Stomach (tissue), 19 donors: ENCODE measurements at regions of chr1 and their contacts with region 1.

Region 1: DNA sequence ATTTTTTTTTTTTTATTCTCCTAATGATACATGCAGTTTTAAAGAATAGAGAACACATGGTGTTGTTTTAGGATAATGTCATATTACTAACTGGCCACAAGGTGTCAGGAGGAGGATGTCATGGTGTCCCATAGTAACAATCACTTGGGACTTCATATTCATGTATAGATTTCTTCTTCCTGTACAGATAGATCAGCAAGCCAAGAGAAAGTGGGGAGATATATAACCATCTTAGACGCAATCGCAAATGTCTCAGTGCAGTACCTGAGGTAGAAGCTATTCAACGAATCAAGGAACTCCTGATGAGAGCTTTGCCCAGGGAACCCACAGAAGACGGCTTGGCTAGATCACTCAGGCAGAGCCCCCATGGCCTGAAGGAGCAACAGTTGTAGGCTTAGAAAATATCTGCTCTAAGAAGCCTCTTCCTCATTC is 12.3 kb downstream of the OR2T11 start:
- DNase-seq: peak in 1 of 2 donors; percentile 72
- H3K4me3 ChIP-seq: no peak overlapping the region
- H3K27ac ChIP-seq: no peak overlapping the region
- H3K4me1 ChIP-seq: no peaks in the 10 kb centered on the region
- H3K27me3 ChIP-seq: no peaks in the 10 kb centered on the region
- CTCF ChIP-seq: peak in 5 of 7 experiments; percentile 24 to 60 (median 57)
- EP300 ChIP-seq: no peak
- POLR2A ChIP-seq: no peak

Region 2: DNA sequence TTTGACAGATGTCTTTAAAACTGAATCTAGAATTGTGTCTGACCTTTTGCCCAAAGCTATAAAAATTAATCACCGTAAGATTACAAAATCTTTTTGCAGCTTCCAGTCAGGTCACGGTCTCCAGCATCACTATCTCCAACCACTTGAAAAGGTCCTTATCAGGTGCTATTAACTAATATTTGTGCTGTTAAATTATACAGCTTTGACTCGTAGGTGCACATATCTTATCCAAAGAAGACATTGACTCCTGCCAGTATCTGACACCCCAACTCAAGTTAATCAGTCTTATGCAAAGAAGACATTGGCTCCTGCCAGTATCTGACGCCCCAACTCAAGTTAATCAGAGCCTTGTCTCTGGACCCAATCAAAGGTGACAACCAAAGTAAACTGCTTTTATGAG is 152.9 kb after region 1 on chr1:
- intact Hi-C with region 1: no loop called
- DNase-seq: no peak
- H3K4me3 ChIP-seq: no peak overlapping the region
- H3K27ac ChIP-seq: no peak overlapping the region
- H3K4me1 ChIP-seq: no peaks in the 10 kb centered on the region
- H3K27me3 ChIP-seq: no peaks in the 10 kb centered on the region
- CTCF ChIP-seq: no peak
- EP300 ChIP-seq: no peak
- POLR2A ChIP-seq: no peak

Region 3: DNA sequence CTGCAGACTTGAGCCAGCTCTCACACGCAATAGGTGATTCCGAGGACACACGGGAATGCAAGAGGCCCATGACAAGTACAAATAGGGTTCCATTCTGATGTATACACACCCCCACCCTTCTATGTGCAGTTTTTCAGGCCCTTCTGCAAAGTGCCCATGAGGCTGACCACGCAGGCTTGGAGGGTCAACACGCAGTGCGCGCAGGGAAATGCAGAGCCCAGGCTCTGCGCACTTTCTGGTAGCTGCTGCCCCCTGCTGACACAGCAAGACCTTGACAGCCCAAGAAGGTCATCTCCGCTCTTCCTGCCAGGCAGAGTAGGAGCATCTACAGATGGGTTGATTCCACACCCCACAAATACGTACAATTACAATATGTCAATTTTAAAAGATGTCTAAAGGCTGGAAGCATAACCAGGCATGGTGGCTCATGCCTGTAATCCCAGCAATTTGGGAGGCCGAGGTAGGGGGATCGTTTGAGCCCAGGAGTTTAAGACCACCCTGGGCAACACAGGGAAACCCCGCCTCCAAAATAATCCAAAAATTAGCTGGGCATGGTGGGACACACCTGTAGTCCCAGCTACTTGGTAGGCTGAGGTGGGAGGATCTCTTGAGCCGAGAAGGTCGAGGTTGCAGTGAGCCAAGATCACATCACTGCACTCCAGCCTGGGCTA is 184.6 kb after region 1 on chr1:
- intact Hi-C with region 1: loop called (anchors 5 kb)
- DNase-seq: peak; percentile 67 to 83
- H3K4me3 ChIP-seq: no peak overlapping the region
- H3K27ac ChIP-seq: no peak overlapping the region
- H3K4me1 ChIP-seq: peaks cover 8 to 46% (median 36%) of the 10 kb centered on the region in 4 donors
- H3K27me3 ChIP-seq: peaks cover 0 to 3% (median 0%) of the 10 kb centered on the region in 3 donors
- CTCF ChIP-seq: peak in 5 of 7 experiments; percentile 52 to 80 (median 66)
- EP300 ChIP-seq: no peak
- POLR2A ChIP-seq: no peak

Region 4: GRCh38 chr1:248897412-248898337 is 275.1 kb after region 1 on chr1:
- intact Hi-C with region 1: no loop called
- DNase-seq: no peak
- H3K4me3 ChIP-seq: peak overlapping the region in 2 of 4 donors; percentile 3 to 21
- H3K27ac ChIP-seq: no peak overlapping the region
- H3K4me1 ChIP-seq: peaks cover 0 to 7% (median 3%) of the 10 kb centered on the region in 4 donors
- H3K27me3 ChIP-seq: peaks cover 0 to 33% (median 0%) of the 10 kb centered on the region in 3 donors
- CTCF ChIP-seq: no peak
- EP300 ChIP-seq: no peak
- POLR2A ChIP-seq: no peak